WTC11 (cell line): ENCODE measurements at regions of chr11 and their contacts with region 1.

Region 1: GRCh38 chr11:67265633-67266423 is 445 bp upstream of the GRK2 start:
- DNase-seq: peak; percentile 86
- ATAC-seq: peak; percentile 45
- H3K4me3 Mint-ChIP-seq: peak overlapping the region; percentile 70
- H3K27ac Mint-ChIP-seq: peak overlapping the region; percentile 63
- H3K4me1 Mint-ChIP-seq: peaks cover 48% of the 10 kb centered on the region
- H3K27me3 Mint-ChIP-seq: peaks cover 25% of the 10 kb centered on the region
- CTCF ChIP-seq: peak; percentile 69; the same call in 1 of the 2 replicates

Region 2: DNA sequence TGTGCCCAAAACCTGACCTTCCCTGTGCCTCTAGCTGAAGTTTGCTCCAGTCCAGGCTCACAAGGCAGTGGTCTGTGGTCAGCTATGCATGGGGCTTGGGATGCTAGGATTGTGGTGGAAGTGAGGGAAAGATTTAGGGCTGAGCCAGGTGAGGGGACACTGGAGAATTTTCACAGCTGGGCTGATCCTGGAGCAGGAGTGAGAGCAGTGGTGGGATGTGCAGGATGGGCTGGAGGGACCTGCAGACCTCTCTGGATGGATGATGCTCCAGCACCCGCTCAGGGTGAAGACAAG is 170.7 kb before region 1 on chr11:
- CTCF ChIA-PET with region 1: interaction called, 10 read pairs
- POLR2A ChIA-PET with region 1: no interaction called
- DNase-seq: no peak
- ATAC-seq: no peak
- H3K4me3 Mint-ChIP-seq: no peak overlapping the region
- H3K27ac Mint-ChIP-seq: no peak overlapping the region
- H3K4me1 Mint-ChIP-seq: peaks cover 15% of the 10 kb centered on the region
- H3K27me3 Mint-ChIP-seq: no peaks in the 10 kb centered on the region
- CTCF ChIP-seq: peak; percentile 8; the same call in 1 of the 2 replicates

Region 3: DNA sequence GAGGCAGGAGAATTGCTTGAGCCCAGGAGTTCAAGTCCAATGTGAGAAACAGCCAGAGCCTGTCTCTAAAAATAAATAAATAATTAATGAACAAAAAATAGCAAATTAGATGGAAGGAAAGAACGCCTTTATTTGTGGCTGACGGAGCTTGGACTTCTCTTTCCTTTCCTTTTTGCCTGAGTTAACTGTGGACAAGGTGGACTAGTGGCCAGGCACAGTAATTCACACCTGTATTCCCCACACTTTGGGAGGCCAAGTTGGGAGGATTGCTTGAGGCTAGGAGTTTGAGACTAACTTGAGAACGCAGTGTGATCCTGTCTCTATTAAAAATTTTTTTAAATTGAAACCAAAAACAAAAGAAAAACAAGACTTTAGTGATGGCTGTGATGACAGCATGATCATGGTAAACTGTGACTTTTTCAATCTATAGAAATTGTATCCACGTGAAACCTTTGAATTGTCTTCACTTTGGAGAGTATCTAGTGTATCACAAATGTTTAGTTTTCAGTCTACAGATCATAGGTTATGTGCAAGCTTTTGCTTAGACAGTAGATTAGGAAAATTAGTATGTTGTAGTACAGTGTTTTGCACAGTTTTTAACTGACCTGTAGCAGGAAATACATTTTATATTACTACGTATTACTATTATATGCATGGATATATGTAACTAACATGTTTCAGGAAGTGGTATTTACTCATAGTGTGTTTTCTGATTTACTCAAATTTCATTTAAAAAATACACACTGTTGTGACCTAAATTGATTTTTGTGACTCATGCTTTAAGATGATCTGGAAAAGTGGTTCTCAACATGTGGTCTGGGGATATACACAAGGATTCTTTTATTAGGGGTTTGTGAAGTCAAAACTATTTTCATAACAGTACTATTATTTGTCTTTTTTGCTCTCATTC is 104.7 kb before region 1 on chr11:
- CTCF ChIA-PET with region 1: no interaction called
- POLR2A ChIA-PET with region 1: no interaction called
- DNase-seq: no peak
- ATAC-seq: no peak
- H3K4me3 Mint-ChIP-seq: no peak overlapping the region
- H3K27ac Mint-ChIP-seq: no peak overlapping the region
- H3K4me1 Mint-ChIP-seq: peaks cover 9% of the 10 kb centered on the region
- H3K27me3 Mint-ChIP-seq: no peaks in the 10 kb centered on the region
- CTCF ChIP-seq: no peak

Region 4: GRCh38 chr11:67277231-67277961 is 11.6 kb after region 1 on chr11:
- CTCF ChIA-PET with region 1: interaction called, 27 read pairs
- POLR2A ChIA-PET with region 1: interaction called, 4 read pairs
- DNase-seq: peak; percentile 83
- ATAC-seq: peak; percentile 84
- H3K4me3 Mint-ChIP-seq: peak overlapping the region; percentile 30; the same call in 1 of the 2 replicates
- H3K27ac Mint-ChIP-seq: peak overlapping the region; percentile 95
- H3K4me1 Mint-ChIP-seq: peaks cover 26% of the 10 kb centered on the region
- H3K27me3 Mint-ChIP-seq: no peaks in the 10 kb centered on the region
- CTCF ChIP-seq: no peak

Region 5: DNA sequence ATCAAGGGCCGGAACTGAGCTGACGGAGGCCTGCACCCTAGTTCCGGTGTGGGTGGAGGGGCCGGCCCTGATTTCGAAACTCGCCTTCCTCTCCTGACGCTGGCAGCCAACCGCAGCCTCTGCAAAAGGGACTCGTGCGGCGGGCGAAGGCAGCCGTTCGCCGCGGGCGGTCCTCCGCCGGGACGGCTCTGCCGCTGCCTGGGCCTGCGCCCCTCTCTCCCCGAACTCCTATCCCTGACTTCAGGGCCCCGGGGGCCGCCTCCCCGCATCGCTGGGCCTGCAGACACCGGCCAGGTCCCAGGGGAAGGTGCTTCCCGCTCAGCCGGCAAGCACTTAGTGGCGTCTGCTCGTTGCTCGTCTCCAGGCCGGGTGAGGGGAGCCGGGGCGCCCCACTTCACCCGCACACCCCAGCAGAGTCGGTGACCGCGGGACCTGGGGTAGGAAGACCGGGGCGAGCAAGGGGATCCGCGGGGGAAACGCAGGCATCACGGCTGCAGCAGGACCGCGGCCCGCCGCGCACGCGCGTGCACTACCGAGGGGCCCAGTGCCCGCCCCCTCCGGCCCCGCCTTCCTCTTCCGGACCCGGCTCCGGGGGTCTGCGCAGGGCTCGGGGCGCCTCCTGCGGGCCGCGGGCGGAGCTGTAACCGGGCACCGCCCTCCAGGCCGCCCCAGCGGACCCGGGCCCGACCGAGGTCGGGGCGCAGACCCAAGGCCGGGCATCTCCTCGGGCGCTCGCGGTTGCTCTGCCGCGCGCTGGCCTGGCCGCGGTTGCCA is 22.8 kb after region 1 on chr11:
- CTCF ChIA-PET with region 1: interaction called, 39 read pairs
- POLR2A ChIA-PET with region 1: interaction called, 3 read pairs
- DNase-seq: peak; percentile 83
- ATAC-seq: peak; percentile 88
- H3K4me3 Mint-ChIP-seq: peak overlapping the region; percentile 66
- H3K27ac Mint-ChIP-seq: peak overlapping the region; percentile 95; the same call in 1 of the 2 replicates
- H3K4me1 Mint-ChIP-seq: peaks cover 15% of the 10 kb centered on the region
- H3K27me3 Mint-ChIP-seq: no peaks in the 10 kb centered on the region
- CTCF ChIP-seq: peak; percentile 26; the same call in 1 of the 2 replicates

Region 6: DNA sequence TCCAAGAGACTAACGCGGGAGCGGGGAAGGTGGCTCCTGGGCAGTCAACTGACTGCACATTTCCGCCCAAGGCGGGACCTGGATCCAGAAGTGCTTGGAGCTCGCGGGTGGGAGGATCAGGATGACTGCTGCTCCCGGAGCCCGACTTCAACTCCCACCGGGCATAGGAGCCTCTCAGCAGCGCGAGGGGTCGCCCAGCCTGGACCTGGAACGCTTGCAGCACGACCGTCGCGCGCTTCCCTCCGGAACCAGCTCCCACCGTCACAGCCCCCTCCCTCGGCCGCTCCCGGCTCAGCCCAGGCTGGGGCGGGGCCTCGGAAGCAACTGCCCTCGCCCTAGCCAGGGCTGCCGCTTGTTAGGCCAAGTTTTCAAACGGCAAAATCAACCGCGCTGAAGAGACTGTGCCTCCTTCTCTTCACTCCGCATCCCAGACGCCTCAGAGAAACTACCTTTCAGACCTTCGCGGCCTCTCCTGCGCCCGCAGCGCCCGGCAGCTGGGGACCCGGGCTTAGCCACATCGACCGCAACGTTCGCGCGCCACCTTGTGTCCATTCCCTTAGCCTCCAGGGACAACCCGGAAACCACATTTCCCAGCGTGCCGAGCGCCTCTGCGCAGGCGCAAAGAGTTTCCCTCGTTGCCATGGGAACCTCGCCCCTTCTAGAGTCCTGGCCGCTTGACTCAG is 51.5 kb after region 1 on chr11:
- CTCF ChIA-PET with region 1: interaction called, 122 read pairs
- POLR2A ChIA-PET with region 1: interaction called, 4 read pairs
- DNase-seq: peak; percentile 99
- ATAC-seq: peak; percentile 83
- H3K4me3 Mint-ChIP-seq: peak overlapping the region; percentile 91
- H3K27ac Mint-ChIP-seq: peak overlapping the region; percentile 96
- H3K4me1 Mint-ChIP-seq: peaks cover 5% of the 10 kb centered on the region
- H3K27me3 Mint-ChIP-seq: peaks cover 41% of the 10 kb centered on the region
- CTCF ChIP-seq: peak; percentile 58

Region 7: DNA sequence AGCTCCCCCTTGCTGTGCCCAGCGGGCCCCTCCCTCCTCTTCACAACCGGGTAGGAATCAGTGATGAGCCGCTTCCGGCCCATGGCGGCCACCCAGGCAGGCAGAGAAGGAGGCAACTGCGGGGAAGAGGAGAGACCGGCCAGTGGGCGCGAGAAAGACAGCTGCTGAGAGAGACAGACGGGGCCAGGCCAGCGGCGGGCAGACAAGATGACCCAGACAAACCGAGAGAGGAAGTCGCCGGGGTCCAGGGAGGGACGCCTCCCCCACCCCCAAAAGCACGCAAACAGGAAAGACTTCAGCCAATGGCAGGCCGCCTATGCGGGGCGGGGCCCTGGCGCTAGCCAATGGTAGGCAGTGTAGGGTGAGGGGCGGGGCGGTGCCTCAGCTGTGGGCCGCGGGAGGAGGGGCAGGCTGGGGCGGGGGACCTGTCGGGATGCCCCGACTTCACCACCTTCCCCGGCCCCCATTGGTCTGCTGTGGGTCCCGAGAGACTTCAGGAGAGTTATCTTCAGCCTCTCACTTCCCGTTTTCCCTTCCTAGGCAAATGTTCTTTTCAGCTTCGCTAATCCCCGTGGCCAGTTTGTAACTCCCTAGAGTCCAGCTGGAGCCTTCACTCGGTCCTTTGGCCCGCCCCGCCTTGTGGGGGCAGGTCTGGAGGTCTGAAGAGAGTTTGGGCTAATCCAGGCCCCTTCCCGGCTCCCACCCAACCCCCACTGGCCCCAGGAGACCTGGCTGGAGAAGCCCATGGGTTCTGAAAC is 87.7 kb after region 1 on chr11 and contains the start of gene POLD4:
- CTCF ChIA-PET with region 1: interaction called, 13 read pairs
- POLR2A ChIA-PET with region 1: no interaction called
- DNase-seq: peak; percentile 99
- ATAC-seq: peak; percentile 88
- H3K4me3 Mint-ChIP-seq: peak within 1 kb of the TSS; percentile 91
- H3K27ac Mint-ChIP-seq: peak within 1 kb of the TSS; percentile 90
- H3K4me1 Mint-ChIP-seq: peaks cover 34% of the 10 kb centered on the region
- H3K27me3 Mint-ChIP-seq: peaks cover 10% of the 10 kb centered on the region
- CTCF ChIP-seq: no peak
- total RNA-seq, gene POLD4: 30.3 to 38.3 TPM (median 37.7 TPM) in 3 replicates